Esophagus muscularis mucosa (tissue), 4 donors: ENCODE measurements at regions of chr6 and their contacts with region 1.

Region 1: GRCh38 chr6:28355743-28356665 is 6.3 kb downstream of the ZKSCAN3 start:
- DNase-seq: peak; percentile 94
- H3K4me3 ChIP-seq: peak overlapping the region; percentile 60 to 74 (median 64)
- H3K27ac ChIP-seq: peak overlapping the region; percentile 83 to 88 (median 87)
- H3K4me1 ChIP-seq: peaks cover 32 to 51% (median 46%) of the 10 kb centered on the region in 4 donors
- H3K27me3 ChIP-seq: no peaks in the 10 kb centered on the region
- CTCF ChIP-seq: peak; percentile 85 to 95 (median 91)
- EP300 ChIP-seq: no peak
- POLR2A ChIP-seq: no peak

Region 2: DNA sequence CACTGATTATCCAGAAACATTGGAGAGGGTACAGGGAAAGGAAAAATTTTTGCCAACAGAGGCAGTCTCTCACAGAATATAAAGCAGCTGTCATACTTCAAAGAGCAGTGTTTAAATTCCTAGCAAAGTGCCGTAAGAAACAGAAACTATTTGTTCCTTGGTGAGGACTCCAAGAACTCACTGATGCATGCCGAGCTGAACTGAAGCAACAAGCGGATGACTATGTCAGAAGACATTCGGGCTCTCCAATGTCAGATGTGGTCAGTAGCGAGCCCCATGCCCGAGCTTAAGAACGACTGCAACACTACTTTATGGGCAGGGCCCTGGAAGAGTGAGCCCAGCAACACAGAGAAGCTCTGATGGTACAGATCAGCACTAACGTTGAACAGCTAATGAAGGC is 344.3 kb before region 1 on chr6:
- intact Hi-C with region 1: no loop called
- DNase-seq: no peak
- H3K4me3 ChIP-seq: no peak overlapping the region
- H3K27ac ChIP-seq: no peak overlapping the region
- H3K4me1 ChIP-seq: no peaks in the 10 kb centered on the region
- H3K27me3 ChIP-seq: no peaks in the 10 kb centered on the region
- CTCF ChIP-seq: no peak
- EP300 ChIP-seq: no peak
- POLR2A ChIP-seq: no peak

Region 3: GRCh38 chr6:28080631-28081485 is 275.1 kb before region 1 on chr6:
- intact Hi-C with region 1: loop called (anchors 5 kb)
- DNase-seq: peak; percentile 99
- H3K4me3 ChIP-seq: peak overlapping the region; percentile 69 to 89 (median 74)
- H3K27ac ChIP-seq: peak overlapping the region; percentile 81 to 89 (median 88)
- H3K4me1 ChIP-seq: peaks cover 12% of the 10 kb centered on the region in 4 donors
- H3K27me3 ChIP-seq: no peaks in the 10 kb centered on the region
- CTCF ChIP-seq: no peak
- EP300 ChIP-seq: no peak
- POLR2A ChIP-seq: no peak

Region 4: DNA sequence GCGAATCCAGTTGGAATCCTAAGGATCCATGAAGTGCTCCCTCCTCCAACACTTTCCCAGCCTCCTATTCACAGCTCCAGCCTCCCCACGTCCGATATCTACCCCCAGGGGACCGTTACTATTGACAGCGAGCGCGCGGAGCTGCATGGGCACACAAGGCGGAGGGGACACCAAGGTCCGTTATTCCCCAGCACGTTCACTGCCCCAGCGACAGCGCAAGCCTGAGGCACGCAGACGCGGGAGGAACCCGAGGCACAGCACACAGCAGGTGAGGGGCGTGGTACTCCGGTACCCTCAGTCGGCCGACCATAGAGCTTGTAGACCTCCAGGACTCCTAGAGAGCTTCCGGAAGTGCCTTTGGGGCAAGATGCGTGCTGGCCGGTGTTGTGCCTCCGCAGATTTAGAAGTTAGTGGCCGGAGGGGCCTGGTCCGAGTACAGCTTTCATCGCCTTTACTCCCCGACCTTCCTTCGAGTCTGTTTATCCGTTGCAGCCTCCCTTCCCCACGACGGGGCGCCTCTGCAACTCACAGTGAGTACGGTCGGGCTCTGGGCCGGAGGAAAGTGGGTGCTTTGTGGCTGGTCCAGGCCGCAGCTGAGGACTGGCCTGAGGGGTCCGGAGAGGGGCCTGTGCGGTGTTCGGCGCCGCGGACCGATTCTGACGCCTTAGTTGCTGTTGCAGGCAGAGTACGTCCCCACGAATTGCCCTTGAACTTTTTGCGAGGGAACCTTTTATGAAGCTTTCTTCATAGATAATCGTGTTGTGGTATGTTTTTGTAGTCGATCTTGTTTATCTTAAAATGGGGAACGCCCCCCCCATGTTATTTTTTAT is 214.3 kb before region 1 on chr6 and contains the start of gene ZKSCAN8:
- intact Hi-C with region 1: loop called (anchors 5 kb)
- DNase-seq: no peak
- H3K4me3 ChIP-seq: peak within 1 kb of the TSS; percentile 74 to 90 (median 82)
- H3K27ac ChIP-seq: peak within 1 kb of the TSS; percentile 76 to 83 (median 79)
- H3K4me1 ChIP-seq: peaks cover 36 to 50% (median 48%) of the 10 kb centered on the region in 4 donors
- H3K27me3 ChIP-seq: no peaks in the 10 kb centered on the region
- CTCF ChIP-seq: no peak
- EP300 ChIP-seq: no peak
- POLR2A ChIP-seq: no peak
- total RNA-seq, gene ZKSCAN8: 18.7 to 21.7 (median 20.8) TPM

Region 5: DNA sequence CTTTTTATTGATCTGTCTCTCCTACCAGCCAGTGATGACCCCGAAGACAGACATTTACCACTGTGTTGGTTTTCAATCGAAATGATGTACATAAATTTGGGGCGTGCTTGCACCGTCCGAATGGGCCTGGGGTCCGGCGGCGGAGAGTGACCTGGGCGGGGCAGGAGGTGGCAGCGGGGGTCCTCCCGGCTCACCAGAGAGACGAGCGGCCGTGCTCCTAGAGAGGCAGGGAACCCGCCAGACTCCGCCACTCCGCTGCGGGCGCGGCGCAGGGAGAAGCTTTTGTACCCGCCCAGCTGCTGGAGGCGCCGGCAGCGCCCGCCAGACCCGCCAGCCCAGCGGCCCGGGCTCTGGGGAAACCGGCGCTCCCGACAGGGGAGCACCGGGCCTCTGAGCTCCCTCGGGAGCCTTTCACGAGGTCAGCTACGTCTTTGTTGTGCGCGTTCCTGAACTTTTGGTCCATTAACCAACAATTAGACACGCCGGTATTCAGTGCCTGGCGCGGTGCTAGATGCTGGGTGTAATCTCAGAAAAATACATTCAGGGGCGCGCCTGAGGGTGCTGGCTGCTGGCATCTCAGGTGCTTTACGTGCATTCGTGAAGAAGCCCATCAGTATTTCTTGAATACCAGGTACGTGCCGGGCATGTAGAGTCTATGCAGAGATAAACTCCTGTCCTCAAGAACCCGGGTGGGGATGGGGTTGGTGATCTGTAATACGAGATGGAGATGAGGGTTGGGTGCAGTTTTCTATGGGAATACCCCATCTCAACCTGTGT is 74.5 kb before region 1 on chr6 and contains the start of gene PGBD1:
- intact Hi-C with region 1: loop called (anchors 5 kb)
- DNase-seq: no peak
- H3K4me3 ChIP-seq: peak within 1 kb of the TSS; percentile 69 to 77 (median 76)
- H3K27ac ChIP-seq: peak within 1 kb of the TSS; percentile 74 to 81 (median 79)
- H3K4me1 ChIP-seq: peaks cover 6 to 17% (median 14%) of the 10 kb centered on the region in 4 donors
- H3K27me3 ChIP-seq: no peaks in the 10 kb centered on the region
- CTCF ChIP-seq: no peak
- EP300 ChIP-seq: no peak
- POLR2A ChIP-seq: no peak
- total RNA-seq, gene PGBD1: 5.8 to 8.7 (median 7.1) TPM

Region 6: GRCh38 chr6:28425944-28426541 is 70.0 kb after region 1 on chr6:
- intact Hi-C with region 1: no loop called
- DNase-seq: no peak
- H3K4me3 ChIP-seq: no peak overlapping the region
- H3K27ac ChIP-seq: no peak overlapping the region
- H3K4me1 ChIP-seq: no peaks in the 10 kb centered on the region
- H3K27me3 ChIP-seq: no peaks in the 10 kb centered on the region
- CTCF ChIP-seq: no peak
- EP300 ChIP-seq: no peak
- POLR2A ChIP-seq: no peak